GM12878 (cell line): ENCODE measurements at regions of chr20 and their contacts with region 1.

Region 1: DNA sequence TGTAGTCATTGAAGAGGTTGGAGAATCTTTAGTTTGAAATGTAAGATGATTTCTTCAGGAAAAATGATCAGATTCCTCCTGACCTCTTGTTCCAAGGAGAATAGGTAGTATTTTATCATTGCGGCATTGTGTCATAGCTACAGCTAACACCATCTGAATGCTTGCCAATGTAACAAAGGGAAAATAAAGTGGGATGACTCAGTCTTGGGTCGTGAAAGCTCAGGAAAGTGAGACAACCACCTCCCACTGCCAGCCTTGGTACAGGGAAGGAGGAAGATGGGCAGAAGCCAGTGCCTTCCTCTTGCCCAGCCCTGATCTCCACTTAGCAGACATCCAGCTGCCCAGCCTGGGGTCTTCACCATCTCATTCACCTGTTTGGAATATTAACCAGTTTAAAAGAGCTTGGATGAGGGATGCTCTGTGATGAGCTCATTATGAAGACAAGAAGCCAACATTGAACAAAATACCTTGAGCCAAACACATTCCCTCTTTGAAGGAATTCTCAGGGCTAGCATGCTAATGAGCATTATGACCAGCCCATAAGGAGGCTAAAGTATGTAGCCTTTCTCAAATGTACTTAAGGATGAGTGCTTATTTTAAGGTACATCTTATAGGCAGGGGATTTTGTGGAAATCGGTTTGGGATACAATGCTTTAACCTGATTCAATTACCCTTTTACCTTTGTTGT is 40.0 kb upstream of the APCDD1L start:
- DNase-seq: no peak
- ATAC-seq: no peak
- H3K4me3 ChIP-seq: no peak overlapping the region
- H3K27ac ChIP-seq: no peak overlapping the region
- H3K4me1 ChIP-seq: no peaks in the 10 kb centered on the region
- H3K27me3 ChIP-seq: no peaks in the 10 kb centered on the region
- CTCF ChIP-seq: no peak
- EP300 ChIP-seq: no peak
- POLR2A ChIP-seq: no peak
- RAD21 ChIP-seq: no peak

Region 2: GRCh38 chr20:59820204-59821041 is 1265.2 kb after region 1 on chr20:
- CTCF ChIA-PET with region 1: no interaction called
- POLR2A ChIA-PET with region 1: no interaction called
- RAD21 ChIA-PET with region 1: no interaction called
- SMC1A ChIA-PET with region 1: no interaction called
- in situ Hi-C with region 1: loop called (anchors 25 kb)
- intact Hi-C with region 1: no loop called
- DNase-seq: no peak
- ATAC-seq: peak; percentile 72
- H3K4me3 ChIP-seq: no peak overlapping the region
- H3K27ac ChIP-seq: no peak overlapping the region
- H3K4me1 ChIP-seq: no peaks in the 10 kb centered on the region
- H3K27me3 ChIP-seq: no peaks in the 10 kb centered on the region
- CTCF ChIP-seq: no peak
- EP300 ChIP-seq: no peak
- POLR2A ChIP-seq: no peak
- RAD21 ChIP-seq: no peak